ENCODE measurements at regions of chr7 and their contacts with region 1.

Region 1: GRCh38 chr7:81499262-81500116 is 270.4 kb downstream of the HGF start:
- DNase-seq: peak; percentile 66
- H3K4me3 ChIP-seq: no peak overlapping the region
- H3K27ac ChIP-seq: no peak overlapping the region
- H3K4me1 ChIP-seq: no peaks in the 10 kb centered on the region
- CTCF ChIP-seq: peak; percentile 78

Region 2: DNA sequence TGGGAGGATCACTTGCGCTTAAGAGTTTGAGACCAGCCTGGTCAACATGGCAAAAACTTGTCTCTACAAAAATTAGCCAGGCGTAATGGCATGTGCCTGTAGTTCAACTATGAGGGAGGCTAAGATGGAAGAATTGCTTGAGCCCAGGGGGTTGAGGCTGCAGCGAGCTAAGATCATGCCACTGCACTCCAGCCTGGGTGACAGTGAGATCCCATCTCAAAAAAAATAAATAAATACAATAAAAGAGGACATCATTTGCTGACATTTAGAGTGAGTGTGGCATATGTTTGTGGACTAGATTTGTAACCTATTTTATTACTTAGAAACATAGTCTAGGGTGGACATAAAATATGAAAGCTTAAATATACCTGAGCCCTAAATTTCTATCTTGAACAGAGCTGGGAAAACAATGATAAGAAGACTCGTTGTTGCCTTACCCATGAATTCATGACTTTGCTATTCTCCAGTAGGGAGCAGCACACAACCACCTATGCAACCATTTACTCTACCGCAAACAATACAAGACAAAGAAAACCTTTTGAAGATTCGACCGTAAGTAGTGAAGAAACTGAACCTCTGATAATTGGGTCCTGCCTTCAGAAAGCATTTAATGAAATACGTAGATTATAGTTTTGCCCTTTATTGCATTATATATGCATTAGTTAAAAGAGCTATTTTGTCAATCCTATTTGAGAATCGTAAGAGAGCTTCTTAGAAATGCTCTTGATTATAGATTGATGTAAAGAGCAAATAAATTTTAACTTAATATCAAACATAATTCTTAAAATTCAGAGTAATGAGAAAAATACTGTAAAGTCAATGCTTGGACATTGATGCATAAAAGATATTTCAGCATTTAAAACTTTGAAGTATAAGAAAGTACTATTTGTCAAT is 1071.1 kb before region 1 on chr7:
- CTCF ChIA-PET with region 1: no interaction called
- POLR2A ChIA-PET with region 1: no interaction called
- intact Hi-C with region 1: no loop called
- DNase-seq: no peak
- H3K4me3 ChIP-seq: no peak overlapping the region
- H3K27ac ChIP-seq: no peak overlapping the region
- H3K4me1 ChIP-seq: no peaks in the 10 kb centered on the region
- CTCF ChIP-seq: peak; percentile 41; the same call in 1 of the 2 replicates

Region 3: DNA sequence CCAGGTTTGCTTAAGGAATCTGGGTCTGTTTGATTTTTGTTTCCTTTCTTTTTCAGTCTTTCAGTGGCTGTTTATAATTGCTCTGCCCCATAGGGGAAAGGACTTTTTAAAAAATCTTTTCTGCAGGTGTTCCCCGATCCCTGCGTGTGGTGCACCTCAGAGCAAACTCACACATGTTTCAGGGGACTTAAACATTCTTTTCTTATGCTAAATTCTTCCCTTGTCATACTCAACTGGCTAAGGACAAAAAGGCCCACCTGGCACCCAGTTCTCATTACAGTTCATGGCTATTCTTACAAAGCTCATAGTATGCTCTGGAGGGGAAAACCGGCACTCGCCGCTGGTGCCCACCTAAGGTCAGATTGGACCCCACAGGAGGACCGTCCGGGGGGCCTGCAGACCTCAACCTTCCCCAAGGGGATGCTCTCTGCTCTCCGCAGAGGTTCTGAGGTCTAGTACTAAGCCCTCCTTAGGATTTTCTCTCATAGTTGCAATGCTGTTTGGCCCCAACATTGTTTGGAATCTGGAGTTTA is 50.1 kb after region 1 on chr7:
- CTCF ChIA-PET with region 1: no interaction called
- POLR2A ChIA-PET with region 1: no interaction called
- intact Hi-C with region 1: no loop called
- DNase-seq: no peak
- H3K4me3 ChIP-seq: no peak overlapping the region
- H3K27ac ChIP-seq: no peak overlapping the region
- H3K4me1 ChIP-seq: no peaks in the 10 kb centered on the region
- CTCF ChIP-seq: no peak

Region 4: GRCh38 chr7:81956520-81956919 is 457.0 kb after region 1 on chr7:
- CTCF ChIA-PET with region 1: no interaction called
- POLR2A ChIA-PET with region 1: interaction called, 4 read pairs
- intact Hi-C with region 1: loop called (anchors 5 kb)
- DNase-seq: peak; percentile 63
- H3K4me3 ChIP-seq: no peak overlapping the region
- H3K27ac ChIP-seq: no peak overlapping the region
- H3K4me1 ChIP-seq: no peaks in the 10 kb centered on the region
- CTCF ChIP-seq: peak; percentile 88

Region 5: GRCh38 chr7:82017334-82017943 is 518.0 kb after region 1 on chr7:
- CTCF ChIA-PET with region 1: no interaction called
- POLR2A ChIA-PET with region 1: no interaction called
- intact Hi-C with region 1: loop called (anchors 5 kb)
- DNase-seq: peak; percentile 19
- H3K4me3 ChIP-seq: no peak overlapping the region
- H3K27ac ChIP-seq: no peak overlapping the region
- H3K4me1 ChIP-seq: no peaks in the 10 kb centered on the region
- CTCF ChIP-seq: peak; percentile 82

Region 6: GRCh38 chr7:82481499-82482097 is 982.1 kb after region 1 on chr7:
- CTCF ChIA-PET with region 1: no interaction called
- POLR2A ChIA-PET with region 1: no interaction called
- intact Hi-C with region 1: loop called (anchors 10 kb)
- DNase-seq: peak; percentile 13
- H3K4me3 ChIP-seq: no peak overlapping the region
- H3K27ac ChIP-seq: no peak overlapping the region
- H3K4me1 ChIP-seq: no peaks in the 10 kb centered on the region
- CTCF ChIP-seq: peak; percentile 82

Region 7: DNA sequence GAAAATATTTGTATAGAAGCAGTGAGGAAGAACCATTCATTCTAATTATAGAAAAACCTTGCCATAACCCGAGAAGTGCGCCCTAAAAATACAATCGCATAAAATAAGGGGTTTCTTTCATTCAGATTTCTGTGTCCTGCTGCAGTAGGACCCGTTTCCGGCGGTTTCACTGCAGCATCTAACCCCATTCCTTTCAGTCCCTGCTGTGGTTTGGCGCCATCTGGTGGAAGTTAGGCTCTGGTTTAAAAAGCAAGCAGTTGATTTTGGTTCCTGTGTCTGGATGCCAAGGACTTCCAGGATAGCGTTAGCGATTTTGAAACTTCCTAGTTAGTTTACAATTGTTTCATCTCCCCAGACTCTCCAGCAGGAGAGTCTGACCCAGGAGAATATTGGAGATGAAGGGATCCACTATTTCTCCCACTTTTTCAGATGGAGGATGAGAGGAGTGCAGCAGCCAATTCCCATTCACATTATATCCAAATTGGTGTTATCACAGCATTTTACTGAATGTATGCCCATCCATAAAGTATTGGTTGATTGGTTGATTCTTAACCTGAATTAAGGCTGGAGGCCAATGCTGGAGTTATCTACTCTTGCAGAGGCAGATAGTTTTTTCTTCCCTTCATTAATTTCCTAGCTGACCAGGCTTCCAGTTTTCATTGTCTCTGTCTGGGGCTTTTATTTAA is 1072.8 kb after region 1 on chr7:
- CTCF ChIA-PET with region 1: no interaction called
- POLR2A ChIA-PET with region 1: no interaction called
- intact Hi-C with region 1: loop called (anchors 2 kb)
- DNase-seq: peak; percentile 76
- H3K4me3 ChIP-seq: no peak overlapping the region
- H3K27ac ChIP-seq: no peak overlapping the region
- H3K4me1 ChIP-seq: no peaks in the 10 kb centered on the region
- CTCF ChIP-seq: peak; percentile 96

Measured in OCI-LY7 (cell line).